ENCODE measurements at regions of chr12 and their contacts with region 1.

Region 1: GRCh38 chr12:103956516-103957027 is 9.1 kb upstream of the TDG start:
- DNase-seq: peak; percentile 34
- ATAC-seq: peak; percentile 41
- H3K4me3 ChIP-seq: peak overlapping the region; percentile 74
- H3K27ac ChIP-seq: peak overlapping the region; percentile 91
- H3K4me1 ChIP-seq: peaks cover 24% of the 10 kb centered on the region
- H3K27me3 ChIP-seq: no peaks in the 10 kb centered on the region
- CTCF ChIP-seq: no peak

Region 2: DNA sequence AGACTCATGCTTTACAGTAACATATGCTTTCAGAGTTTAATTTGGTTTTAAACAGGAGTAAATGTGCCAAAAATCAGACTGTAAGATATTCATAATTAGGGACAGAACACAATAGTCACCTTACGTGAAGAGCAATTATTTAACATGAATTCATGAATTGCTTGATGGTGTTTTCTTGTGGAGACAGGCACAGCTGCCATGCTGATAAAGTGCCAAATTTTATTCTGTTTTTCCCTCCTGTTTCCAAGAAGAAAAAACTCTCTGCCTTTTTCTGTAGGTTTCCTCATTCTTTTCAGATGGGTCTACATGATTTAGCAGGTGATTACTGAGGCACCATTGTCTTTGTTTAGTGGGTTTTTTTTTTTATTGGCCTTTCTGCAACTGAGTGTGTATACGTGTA is 540.9 kb before region 1 on chr12:
- CTCF ChIA-PET with region 1: no interaction called
- POLR2A ChIA-PET with region 1: no interaction called
- intact Hi-C with region 1: no loop called
- DNase-seq: no peak
- ATAC-seq: no peak
- H3K4me3 ChIP-seq: no peak overlapping the region
- H3K27ac ChIP-seq: no peak overlapping the region
- H3K4me1 ChIP-seq: no peaks in the 10 kb centered on the region
- H3K27me3 ChIP-seq: peaks cover 51% of the 10 kb centered on the region
- CTCF ChIP-seq: no peak

Region 3: GRCh38 chr12:103884316-103884715 is 72.3 kb before region 1 on chr12:
- CTCF ChIA-PET with region 1: no interaction called
- POLR2A ChIA-PET with region 1: interaction called, 4 read pairs
- intact Hi-C with region 1: loop called (anchors 5 kb)
- DNase-seq: peak; percentile 60
- ATAC-seq: no peak
- H3K4me3 ChIP-seq: no peak overlapping the region
- H3K27ac ChIP-seq: no peak overlapping the region
- H3K4me1 ChIP-seq: peaks cover 29% of the 10 kb centered on the region
- H3K27me3 ChIP-seq: no peaks in the 10 kb centered on the region
- CTCF ChIP-seq: peak; percentile 83

Measured in PC-3 (cell line).